Esophagus muscularis mucosa (tissue), 4 donors: ENCODE measurements at regions of chr9 and their contacts with region 1.

Region 1: DNA sequence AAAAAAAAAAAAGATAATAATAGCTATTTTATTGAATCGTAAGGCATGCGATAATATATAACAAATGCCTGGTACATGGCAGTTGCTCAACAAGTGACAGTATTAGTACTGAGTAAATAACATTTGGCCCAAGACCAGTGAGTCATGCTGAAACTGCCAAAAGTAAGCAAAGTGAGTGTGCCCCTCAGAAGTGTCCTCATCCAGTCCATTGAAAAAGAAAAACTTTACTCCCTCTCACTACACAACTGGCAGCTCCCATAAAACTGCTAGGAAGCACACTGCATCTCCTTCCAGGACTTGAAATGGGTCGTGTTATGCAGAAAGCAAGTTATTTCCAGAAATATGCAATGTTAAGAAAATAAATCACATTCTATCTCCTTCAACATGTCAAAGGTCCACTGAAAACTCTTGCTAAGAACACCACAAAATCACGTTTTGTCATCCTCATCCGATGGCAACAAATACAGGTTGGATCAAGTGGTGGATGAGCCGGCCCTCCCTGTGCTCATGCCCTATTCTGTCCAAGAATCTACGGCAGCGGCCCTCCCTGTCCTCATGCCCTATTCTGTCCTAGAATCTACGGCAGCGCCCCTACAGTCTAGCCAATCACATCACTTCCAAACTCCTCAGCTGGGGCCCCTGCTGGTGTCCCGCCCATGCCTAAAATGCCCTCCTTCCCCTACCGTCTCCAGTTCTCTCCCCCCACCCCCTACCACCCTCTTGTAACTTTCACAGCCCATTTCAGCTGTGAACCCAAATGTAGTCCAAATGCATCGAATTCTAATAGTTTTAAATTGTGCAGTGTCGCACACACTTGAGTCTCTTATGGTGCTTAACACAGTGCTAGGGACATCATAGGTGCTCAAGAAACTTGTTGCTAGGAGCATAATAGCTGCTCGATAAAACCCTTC is 12.5 kb downstream of the PTCH1 start:
- DNase-seq: no peak
- H3K4me3 ChIP-seq: peak overlapping the region in 2 of 4 donors; percentile 80 to 87
- H3K27ac ChIP-seq: peak overlapping the region in 1 of 4 donors; percentile 27
- H3K4me1 ChIP-seq: peaks cover 25 to 42% (median 32%) of the 10 kb centered on the region in 4 donors
- H3K27me3 ChIP-seq: no peaks in the 10 kb centered on the region
- CTCF ChIP-seq: no peak
- EP300 ChIP-seq: no peak
- POLR2A ChIP-seq: no peak

Region 2: DNA sequence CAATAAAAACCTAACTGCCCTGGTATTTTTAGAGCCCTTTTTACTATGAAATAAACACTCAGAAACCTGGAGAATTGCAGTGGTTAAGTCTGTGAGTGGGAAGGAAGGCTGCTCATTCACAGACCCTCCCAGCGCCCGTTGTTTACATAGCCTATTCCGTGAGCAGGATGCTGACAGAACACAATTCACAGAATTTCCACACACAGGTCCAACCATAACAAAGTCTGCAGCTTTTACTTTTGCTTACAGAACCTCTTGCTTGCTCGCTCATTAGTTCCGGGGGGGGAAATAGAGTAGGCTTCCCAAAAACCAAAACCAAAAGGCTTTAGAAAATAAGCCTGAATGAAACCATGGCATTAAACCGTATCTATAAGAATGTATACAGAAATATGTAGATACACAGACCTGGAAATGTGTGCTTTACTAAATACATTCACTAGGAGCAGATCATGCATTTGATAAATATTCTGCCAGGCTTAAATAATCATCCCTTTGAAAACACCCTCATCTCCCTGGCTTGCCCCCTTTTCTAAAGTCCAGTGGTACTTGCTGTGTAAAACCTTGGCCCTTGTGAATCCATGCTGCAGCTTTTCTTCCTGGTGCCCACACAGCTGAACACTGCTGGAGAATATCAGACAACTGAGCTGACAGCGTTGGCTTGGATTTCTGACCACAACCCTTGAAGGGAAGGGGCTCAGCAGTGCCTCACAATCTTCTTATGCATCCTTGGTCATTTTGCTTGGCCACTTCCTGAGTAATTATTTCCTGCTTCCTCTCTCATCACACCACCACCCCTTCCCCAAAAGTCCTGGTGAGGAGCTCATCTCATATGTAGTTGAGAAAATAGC is 314.8 kb before region 1 on chr9:
- intact Hi-C with region 1: no loop called
- DNase-seq: no peak
- H3K4me3 ChIP-seq: peak overlapping the region; percentile 3 to 39 (median 28)
- H3K27ac ChIP-seq: peak overlapping the region; percentile 64 to 79 (median 70)
- H3K4me1 ChIP-seq: peaks cover 24 to 54% (median 52%) of the 10 kb centered on the region in 4 donors
- H3K27me3 ChIP-seq: no peaks in the 10 kb centered on the region
- CTCF ChIP-seq: no peak
- EP300 ChIP-seq: no peak
- POLR2A ChIP-seq: no peak

Region 3: DNA sequence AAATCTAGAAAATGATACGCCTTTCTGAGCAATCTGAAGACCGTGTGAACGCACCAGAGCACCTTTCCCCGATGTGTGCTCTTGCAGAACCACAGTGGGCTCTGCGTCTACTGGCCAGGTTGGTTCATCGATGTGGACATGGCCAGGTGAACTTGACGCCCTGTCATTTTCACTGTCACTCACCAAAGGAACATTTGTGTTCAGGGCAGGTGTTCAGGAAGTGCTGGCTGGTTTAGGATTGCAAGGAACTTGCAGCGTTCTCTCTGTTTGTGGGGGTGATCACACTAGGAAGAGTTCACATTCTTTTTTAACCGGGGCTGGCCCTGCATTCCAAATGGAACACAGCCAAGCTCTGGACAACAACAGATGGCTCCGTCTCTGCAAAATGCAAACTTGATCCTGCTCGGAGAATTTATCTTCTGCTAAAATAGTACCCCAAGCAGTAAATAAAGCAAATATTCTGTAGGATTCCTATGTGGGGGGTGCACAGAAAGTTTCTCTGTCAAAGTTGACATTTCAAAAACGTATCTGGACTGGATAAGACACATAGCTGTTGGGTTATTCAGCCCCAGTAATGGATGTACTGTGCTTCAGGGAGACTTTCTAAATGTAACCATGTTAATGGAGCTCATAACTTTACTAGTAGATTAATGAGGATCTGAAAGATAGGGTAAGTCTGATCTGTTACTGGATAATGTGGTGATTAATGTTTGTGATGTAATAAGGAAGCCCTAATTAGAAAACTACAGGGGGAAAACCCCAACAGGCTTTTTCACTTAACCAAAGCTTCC is 141.1 kb before region 1 on chr9:
- intact Hi-C with region 1: loop called (anchors 5 kb)
- DNase-seq: no peak
- H3K4me3 ChIP-seq: no peak overlapping the region
- H3K27ac ChIP-seq: no peak overlapping the region
- H3K4me1 ChIP-seq: peaks cover 0 to 15% (median 11%) of the 10 kb centered on the region in 4 donors
- H3K27me3 ChIP-seq: no peaks in the 10 kb centered on the region
- CTCF ChIP-seq: no peak
- EP300 ChIP-seq: no peak
- POLR2A ChIP-seq: no peak

Region 4: DNA sequence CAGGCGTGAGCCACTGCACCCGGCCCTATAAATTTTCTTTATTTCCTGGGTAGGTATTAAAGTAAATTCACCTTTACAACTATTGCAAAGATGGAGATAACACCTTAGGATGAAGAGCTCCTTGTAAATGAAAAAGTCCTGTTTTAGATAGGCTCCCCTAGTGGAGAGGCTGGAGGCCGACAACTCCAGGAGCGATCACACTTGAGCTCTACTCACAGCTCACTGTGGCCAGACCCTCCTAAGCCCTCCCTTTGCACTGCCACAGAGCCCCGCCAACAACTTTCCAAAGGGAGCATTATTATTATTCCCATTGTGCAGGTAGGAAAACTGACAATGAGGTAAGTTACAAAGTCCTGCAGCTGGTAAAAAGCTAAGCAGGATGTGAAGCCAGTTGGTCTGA is 232.1 kb after region 1 on chr9:
- intact Hi-C with region 1: no loop called
- DNase-seq: no peak
- H3K4me3 ChIP-seq: no peak overlapping the region
- H3K27ac ChIP-seq: no peak overlapping the region
- H3K4me1 ChIP-seq: peaks cover 0 to 12% (median 0%) of the 10 kb centered on the region in 4 donors
- H3K27me3 ChIP-seq: peaks cover 0 to 11% (median 0%) of the 10 kb centered on the region in 4 donors
- CTCF ChIP-seq: peak in 1 of 3 experiments; percentile 19
- EP300 ChIP-seq: no peak
- POLR2A ChIP-seq: no peak